SK-N-SH (cell line): ENCODE measurements at regions of chr19 and their contacts with region 1.

Region 1: DNA sequence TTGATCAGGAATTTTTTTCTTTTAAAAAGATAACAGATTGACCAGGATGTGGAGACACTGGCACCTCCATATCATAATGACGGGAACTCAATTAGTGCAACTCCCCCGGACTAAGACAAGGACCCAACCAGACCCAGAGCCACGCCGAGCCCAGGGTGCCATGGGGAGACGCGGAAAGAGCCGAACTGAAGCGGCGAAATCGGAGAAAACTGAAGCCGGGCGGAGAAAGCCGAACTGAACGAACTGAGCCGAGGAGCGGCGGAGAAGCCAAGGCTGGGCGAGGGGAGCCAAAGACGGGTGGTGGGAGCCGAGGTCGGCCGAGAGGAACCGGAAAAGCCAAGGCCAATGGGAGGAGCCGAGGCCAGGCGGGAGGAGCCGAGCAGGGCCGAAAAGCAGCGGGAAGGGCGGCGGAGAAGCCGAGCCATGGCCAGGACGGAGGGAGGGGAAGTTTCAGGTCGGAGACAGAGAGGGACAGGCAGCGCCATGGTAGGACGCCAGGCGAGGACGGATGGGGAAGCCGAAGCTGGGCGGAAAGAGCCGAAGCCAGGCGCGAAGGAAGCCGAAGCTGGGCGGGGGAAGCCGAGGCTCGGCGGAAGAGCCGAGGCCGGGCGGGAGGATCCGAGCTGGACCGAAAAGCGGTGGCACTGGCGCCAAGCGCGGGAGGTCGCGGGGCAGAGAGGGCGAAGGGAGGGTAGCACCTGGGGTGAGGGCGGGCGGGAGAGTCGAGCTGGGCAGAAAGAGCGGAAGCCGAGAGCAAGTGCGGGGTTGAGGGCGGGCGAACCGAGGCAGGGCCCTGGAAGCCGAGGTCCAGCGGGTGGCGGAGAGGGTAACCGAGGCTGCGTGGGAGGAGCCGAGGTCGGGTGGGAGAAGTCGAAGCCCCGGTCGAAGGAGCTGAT is 29.4 kb downstream of the ZNF557 start:
- DNase-seq: peak; percentile 92
- H3K4me3 ChIP-seq: peak overlapping the region; percentile 59 to 62
- H3K27ac ChIP-seq: peak overlapping the region; percentile 73 to 95
- H3K4me1 ChIP-seq: peaks cover 0 to 2% of the 10 kb centered on the region in 2 experiments; a peak in 2 of 4 replicates
- H3K27me3 ChIP-seq: no peaks in the 10 kb centered on the region
- CTCF ChIP-seq: no peak
- EP300 ChIP-seq: no peak
- RAD21 ChIP-seq: no peak

Region 2: DNA sequence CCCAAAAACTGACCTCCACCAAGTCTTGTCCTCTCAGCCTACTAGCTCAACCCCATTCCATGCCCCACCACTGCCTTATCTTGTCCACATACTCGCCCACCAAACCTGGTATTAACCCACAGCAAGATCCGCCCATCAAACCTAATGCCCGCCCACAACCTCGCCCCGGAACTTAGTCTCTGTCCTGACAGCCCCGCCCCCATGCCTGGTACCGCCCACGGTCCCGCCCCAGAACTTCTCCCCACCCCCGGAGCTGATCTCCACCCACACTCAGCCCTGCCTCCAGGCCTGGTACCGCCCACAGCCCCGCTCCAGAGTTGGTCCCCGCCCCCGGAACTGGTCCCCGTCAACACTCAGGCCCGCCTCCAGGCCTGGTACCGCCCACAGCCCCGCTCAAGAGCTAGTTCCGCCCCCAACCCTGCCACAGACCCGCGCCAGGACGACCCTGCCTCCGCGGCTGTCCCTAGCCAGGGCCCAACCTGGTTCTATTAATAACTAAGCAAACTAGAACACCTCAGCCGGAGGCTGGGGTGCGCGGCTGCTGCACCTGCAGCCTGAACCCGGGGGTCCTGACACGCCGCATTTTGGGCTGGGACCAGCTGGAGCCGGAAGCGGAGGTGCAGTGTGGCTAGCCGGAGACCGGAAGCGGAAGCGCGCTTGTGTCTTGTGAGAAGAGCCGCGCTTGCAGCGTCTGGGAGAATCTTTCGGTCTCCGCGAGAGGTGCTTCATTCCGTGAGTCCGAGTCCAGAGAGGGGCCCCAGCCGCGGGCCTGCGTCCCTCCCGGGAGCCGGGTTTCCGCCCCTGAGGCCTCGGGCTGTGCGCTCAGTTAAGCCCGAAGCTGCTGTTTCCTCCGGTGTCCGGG is 29.7 kb before region 1 on chr19 and contains the start of gene ZNF557:
- CTCF ChIA-PET with region 1: interaction called, 8 read pairs
- POLR2A ChIA-PET with region 1: interaction called, 15 read pairs
- DNase-seq: peak; percentile 97
- H3K4me3 ChIP-seq: peak within 1 kb of the TSS; percentile 84 to 86
- H3K27ac ChIP-seq: peak within 1 kb of the TSS; percentile 82 to 85
- H3K4me1 ChIP-seq: peaks cover 3 to 4% of the 10 kb centered on the region in 2 experiments; a peak in 2 of 4 replicates
- H3K27me3 ChIP-seq: peaks cover 4% of the 10 kb centered on the region; the same call in 1 of the 2 replicates
- CTCF ChIP-seq: no peak
- EP300 ChIP-seq: no peak
- RAD21 ChIP-seq: no peak
- polyA plus RNA-seq, gene ZNF557: 2.3 and 2.8 TPM in 2 replicates

Region 3: GRCh38 chr19:7115721-7116120 is 16.8 kb after region 1 on chr19:
- CTCF ChIA-PET with region 1: interaction called, 10 read pairs
- POLR2A ChIA-PET with region 1: no interaction called
- DNase-seq: no peak
- H3K4me3 ChIP-seq: no peak overlapping the region
- H3K27ac ChIP-seq: no peak overlapping the region
- H3K4me1 ChIP-seq: no peaks in the 10 kb centered on the region
- H3K27me3 ChIP-seq: no peaks in the 10 kb centered on the region
- CTCF ChIP-seq: no peak
- EP300 ChIP-seq: no peak
- RAD21 ChIP-seq: no peak

Region 4: GRCh38 chr19:7149956-7150705 is 51.2 kb after region 1 on chr19:
- CTCF ChIA-PET with region 1: interaction called, 11 read pairs
- POLR2A ChIA-PET with region 1: no interaction called
- DNase-seq: peak; percentile 19
- H3K4me3 ChIP-seq: no peak overlapping the region
- H3K27ac ChIP-seq: no peak overlapping the region
- H3K4me1 ChIP-seq: no peaks in the 10 kb centered on the region
- H3K27me3 ChIP-seq: no peaks in the 10 kb centered on the region
- CTCF ChIP-seq: no peak
- EP300 ChIP-seq: no peak
- RAD21 ChIP-seq: no peak

Region 5: DNA sequence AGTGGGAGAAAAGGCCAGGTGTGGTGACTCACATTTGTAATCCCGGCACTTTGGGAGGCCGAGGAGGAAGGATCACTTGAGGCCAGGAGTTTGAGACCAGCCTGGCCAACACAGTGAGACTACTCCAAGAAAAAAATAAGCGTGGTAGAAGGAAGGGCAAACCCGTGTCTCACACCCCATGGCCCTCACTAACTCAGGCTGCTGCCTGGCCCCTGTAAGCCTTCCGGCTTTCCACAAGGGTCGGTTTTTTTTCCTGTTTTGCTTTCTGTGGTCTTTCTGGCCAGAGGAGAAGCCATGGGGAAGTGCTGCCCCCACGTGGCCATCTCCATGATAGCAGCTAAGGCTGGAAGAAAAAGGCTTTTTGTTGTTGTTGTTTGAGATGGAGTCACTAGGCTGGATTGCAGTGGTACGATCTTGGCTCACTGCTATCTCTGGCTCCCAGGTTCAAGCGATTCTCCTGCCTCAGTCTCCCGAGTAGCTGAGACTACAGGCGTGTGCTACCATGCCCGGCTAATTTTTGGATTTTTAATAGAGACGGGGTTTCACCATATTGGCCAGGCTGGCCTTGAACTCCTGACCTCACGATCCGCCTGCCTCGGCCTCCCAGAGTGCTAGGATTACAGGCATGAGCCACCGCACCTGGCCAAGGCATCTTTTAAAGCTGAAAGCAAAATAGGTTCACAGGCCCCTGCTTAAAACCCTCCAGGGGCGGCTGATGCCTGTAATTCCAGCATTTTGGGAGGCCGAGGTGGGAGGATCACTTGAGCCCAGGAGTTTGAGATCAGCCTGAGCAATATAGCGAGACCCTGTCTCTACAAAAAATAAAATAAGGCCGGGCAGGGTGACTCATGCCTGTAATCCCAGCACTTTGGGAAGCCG is 242.2 kb after region 1 on chr19:
- CTCF ChIA-PET with region 1: interaction called, 75 read pairs
- POLR2A ChIA-PET with region 1: no interaction called
- DNase-seq: peak; percentile 71
- H3K4me3 ChIP-seq: peak overlapping the region in 1 of 2 experiments; percentile 18; a peak in 1 of 4 replicates
- H3K27ac ChIP-seq: no peak overlapping the region
- H3K4me1 ChIP-seq: no peaks in the 10 kb centered on the region
- H3K27me3 ChIP-seq: peaks cover 21% of the 10 kb centered on the region
- CTCF ChIP-seq: peak; percentile 93
- EP300 ChIP-seq: no peak
- RAD21 ChIP-seq: peak; percentile 97

Region 6: GRCh38 chr19:7355151-7355820 is 256.3 kb after region 1 on chr19:
- CTCF ChIA-PET with region 1: interaction called, 18 read pairs
- POLR2A ChIA-PET with region 1: no interaction called
- DNase-seq: no peak
- H3K4me3 ChIP-seq: no peak overlapping the region
- H3K27ac ChIP-seq: no peak overlapping the region
- H3K4me1 ChIP-seq: no peaks in the 10 kb centered on the region
- H3K27me3 ChIP-seq: no peaks in the 10 kb centered on the region
- CTCF ChIP-seq: no peak
- EP300 ChIP-seq: no peak
- RAD21 ChIP-seq: no peak